CD14-positive monocyte (primary cell): ENCODE measurements at regions of chr10 and their contacts with region 1.

Region 1: GRCh38 chr10:99620713-99621453 is 644 bp upstream of the SLC25A28 start:
- DNase-seq: peak; percentile 92 to 97 (median 97)
- H3K4me3 ChIP-seq: peak overlapping the region; percentile 47 to 88 (median 60)
- H3K4me3 Mint-ChIP-seq: peak overlapping the region; percentile 82 to 90
- H3K27ac ChIP-seq: peak overlapping the region; percentile 95 to 99
- H3K27ac Mint-ChIP-seq: peak overlapping the region; percentile 95 to 99 (median 98)
- H3K4me1 ChIP-seq: peaks cover 38 to 58% of the 10 kb centered on the region in 2 donors
- H3K4me1 Mint-ChIP-seq: peaks cover 46% of the 10 kb centered on the region
- H3K27me3 ChIP-seq: no peaks in the 10 kb centered on the region
- H3K27me3 Mint-ChIP-seq: peaks cover 0 to 2% (median 0%) of the 10 kb centered on the region in 3 donors
- CTCF ChIP-seq: no peak

Region 2: GRCh38 chr10:99395750-99396445 is 225.0 kb before region 1 on chr10:
- intact Hi-C with region 1: loop called in 1 of 2 experiments (anchors 10 kb)
- DNase-seq: no peak
- H3K4me3 ChIP-seq: no peak overlapping the region
- H3K4me3 Mint-ChIP-seq: no peak overlapping the region
- H3K27ac ChIP-seq: no peak overlapping the region
- H3K27ac Mint-ChIP-seq: no peak overlapping the region
- H3K4me1 ChIP-seq: no peaks in the 10 kb centered on the region
- H3K4me1 Mint-ChIP-seq: peaks cover 5% of the 10 kb centered on the region
- H3K27me3 ChIP-seq: no peaks in the 10 kb centered on the region
- H3K27me3 Mint-ChIP-seq: peaks cover 1 to 3% (median 3%) of the 10 kb centered on the region in 3 donors
- CTCF ChIP-seq: no peak

Region 3: DNA sequence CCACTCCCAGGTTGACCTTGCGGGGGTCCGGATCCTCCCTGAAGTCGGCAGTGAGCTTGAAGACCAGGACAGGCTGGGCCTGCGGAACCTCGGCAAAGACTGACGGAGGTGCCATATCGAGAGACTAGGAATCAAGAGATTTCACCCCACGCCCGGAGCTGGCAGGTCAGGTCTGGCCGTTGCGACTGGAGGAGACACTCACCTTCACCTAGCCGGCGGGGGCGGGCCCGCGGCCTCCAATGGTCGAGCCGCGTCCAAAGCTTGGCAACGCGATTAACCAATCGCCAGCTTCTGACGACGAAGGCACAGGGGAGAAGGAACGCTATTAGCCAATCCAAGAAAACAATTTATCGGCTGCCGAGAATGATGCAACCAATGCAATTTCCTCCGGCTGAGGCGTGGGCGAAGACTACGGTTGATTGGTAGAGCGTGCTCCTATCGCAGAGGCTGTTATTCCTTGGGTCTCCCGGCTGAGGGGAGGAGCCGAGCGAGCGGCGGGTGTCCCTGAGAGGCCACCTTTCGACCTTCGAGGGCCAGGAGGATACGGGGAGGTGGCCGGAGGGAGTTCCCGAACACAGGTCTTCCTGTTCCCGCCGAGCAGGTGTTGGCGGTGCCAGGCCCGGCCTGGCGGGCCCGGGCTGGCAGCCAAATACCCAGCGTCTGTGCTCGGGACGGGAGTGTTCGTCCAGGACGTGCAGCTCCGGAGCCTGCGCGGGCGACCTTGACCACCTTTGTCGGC is 190.3 kb before region 1 on chr10 and contains the start of gene GOT1:
- intact Hi-C with region 1: loop called (anchors 5 kb)
- DNase-seq: peak; percentile 94 to 98 (median 96)
- H3K4me3 ChIP-seq: peak within 1 kb of the TSS; percentile 41 to 76 (median 64)
- H3K4me3 Mint-ChIP-seq: peak within 1 kb of the TSS; percentile 99 to 100
- H3K27ac ChIP-seq: peak within 1 kb of the TSS; percentile 83 to 84
- H3K27ac Mint-ChIP-seq: peak within 1 kb of the TSS; percentile 95 to 99 (median 97)
- H3K4me1 ChIP-seq: peaks cover 12 to 19% of the 10 kb centered on the region in 2 donors
- H3K4me1 Mint-ChIP-seq: peaks cover 22% of the 10 kb centered on the region
- H3K27me3 ChIP-seq: no peaks in the 10 kb centered on the region
- H3K27me3 Mint-ChIP-seq: peaks cover 0 to 8% (median 0%) of the 10 kb centered on the region in 3 donors
- CTCF ChIP-seq: no peak
- polyA plus RNA-seq, gene GOT1: 2.6 to 10.4 (median 8.2) TPM

Region 4: DNA sequence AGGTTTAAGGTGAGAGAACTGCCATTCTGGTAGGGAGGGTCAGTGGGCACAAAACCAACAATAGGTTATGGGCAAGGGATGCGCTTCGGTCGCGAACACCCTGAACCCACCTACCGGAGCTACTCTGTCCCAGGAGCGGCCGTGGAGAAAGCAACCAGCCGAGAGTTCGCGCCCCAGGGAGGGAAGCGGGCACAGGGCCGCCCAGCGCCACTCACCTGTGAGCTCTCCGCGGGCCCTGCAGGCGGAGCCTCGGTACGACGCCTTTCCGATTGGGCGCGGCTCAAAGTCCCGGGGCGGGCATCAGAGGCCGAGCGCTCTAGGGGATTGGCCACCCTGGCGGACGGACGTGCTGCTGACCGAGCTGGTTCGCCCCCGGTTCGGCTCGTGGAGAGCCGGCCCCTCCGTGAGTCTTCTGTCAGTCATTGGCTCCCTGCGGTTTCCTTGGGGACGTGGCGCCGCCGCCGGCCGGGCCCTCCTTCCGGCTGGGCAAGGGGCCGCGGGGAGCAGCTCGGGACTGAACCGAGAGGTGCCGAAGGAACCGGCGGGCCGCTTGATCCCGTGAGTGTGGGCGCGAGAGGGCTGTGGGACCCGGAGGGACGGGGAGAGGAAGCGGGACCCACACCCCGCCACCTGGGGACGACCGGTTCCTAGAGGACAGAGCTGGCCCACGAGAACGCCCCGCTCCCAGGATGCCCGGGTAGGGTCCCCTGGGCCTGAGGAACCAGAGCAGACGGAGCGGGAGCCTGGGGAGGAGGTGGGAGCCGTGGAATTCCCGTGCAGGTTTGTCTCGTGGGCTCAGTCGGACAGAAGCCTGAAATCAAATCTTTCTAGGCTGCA is 38.4 kb after region 1 on chr10 and contains the start of gene ENTPD7:
- intact Hi-C with region 1: loop called (anchors 2 to 5 kb)
- DNase-seq: peak; percentile 88 to 91 (median 88)
- H3K4me3 ChIP-seq: peak within 1 kb of the TSS; percentile 80 to 96 (median 90)
- H3K4me3 Mint-ChIP-seq: peak within 1 kb of the TSS; percentile 86 to 95
- H3K27ac ChIP-seq: peak within 1 kb of the TSS; percentile 41 to 78
- H3K27ac Mint-ChIP-seq: peak within 1 kb of the TSS; percentile 82 to 95 (median 90)
- H3K4me1 ChIP-seq: peaks cover 49 to 58% of the 10 kb centered on the region in 2 donors
- H3K4me1 Mint-ChIP-seq: peaks cover 61% of the 10 kb centered on the region
- H3K27me3 ChIP-seq: no peaks in the 10 kb centered on the region
- H3K27me3 Mint-ChIP-seq: peaks cover 0 to 5% (median 0%) of the 10 kb centered on the region in 3 donors
- CTCF ChIP-seq: peak; percentile 24
- polyA plus RNA-seq, gene ENTPD7: 1.2 to 2.9 (median 2.2) TPM

Region 5: GRCh38 chr10:99685597-99685967 is 64.7 kb after region 1 on chr10:
- intact Hi-C with region 1: loop called in 1 of 2 experiments (anchors 2 kb)
- DNase-seq: peak; percentile 73 to 94 (median 80)
- H3K4me3 ChIP-seq: peak overlapping the region in 2 of 3 experiments; percentile 9 to 42
- H3K4me3 Mint-ChIP-seq: peak overlapping the region; percentile 61 to 64
- H3K27ac ChIP-seq: peak overlapping the region; percentile 76 to 77
- H3K27ac Mint-ChIP-seq: peak overlapping the region; percentile 87 to 98 (median 96)
- H3K4me1 ChIP-seq: peaks cover 12 to 21% of the 10 kb centered on the region in 2 donors
- H3K4me1 Mint-ChIP-seq: peaks cover 32% of the 10 kb centered on the region
- H3K27me3 ChIP-seq: no peaks in the 10 kb centered on the region
- H3K27me3 Mint-ChIP-seq: no peaks in the 10 kb centered on the region
- CTCF ChIP-seq: no peak

Region 6: DNA sequence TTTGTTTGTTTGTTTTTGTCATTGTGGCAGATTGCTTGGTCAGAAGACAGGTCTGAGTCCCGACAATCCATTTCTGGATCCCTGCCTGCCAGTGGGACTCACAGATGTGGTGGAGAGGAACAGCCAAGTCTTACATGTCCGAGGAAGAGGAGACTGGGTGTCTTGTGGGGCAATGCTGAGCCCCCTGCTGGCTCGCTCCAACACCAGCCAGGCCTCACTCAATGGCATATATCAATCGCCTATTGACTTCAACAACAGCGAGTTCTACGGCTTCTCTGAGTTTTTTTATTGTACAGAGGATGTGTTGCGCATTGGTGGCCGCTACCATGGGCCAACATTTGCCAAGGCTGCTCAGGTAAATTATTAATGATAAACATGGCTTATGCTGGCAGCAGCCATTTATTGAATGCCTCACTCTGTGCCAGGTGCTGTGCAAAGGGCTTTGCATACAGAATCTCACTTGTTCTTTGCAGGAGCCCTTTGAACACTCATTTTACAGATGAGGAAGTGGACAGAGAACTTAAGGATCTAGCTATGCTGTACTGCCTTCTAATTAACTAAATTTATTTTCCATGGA is 77.7 kb after region 1 on chr10:
- intact Hi-C with region 1: no loop called
- DNase-seq: no peak
- H3K4me3 ChIP-seq: no peak overlapping the region
- H3K4me3 Mint-ChIP-seq: no peak overlapping the region
- H3K27ac ChIP-seq: no peak overlapping the region
- H3K27ac Mint-ChIP-seq: peak overlapping the region in 1 of 7 donors; percentile 79
- H3K4me1 ChIP-seq: no peaks in the 10 kb centered on the region
- H3K4me1 Mint-ChIP-seq: no peaks in the 10 kb centered on the region
- H3K27me3 ChIP-seq: no peaks in the 10 kb centered on the region
- H3K27me3 Mint-ChIP-seq: peaks cover 0 to 4% (median 0%) of the 10 kb centered on the region in 3 donors
- CTCF ChIP-seq: peak; percentile 13